CD14-positive monocyte (primary cell): ENCODE measurements at regions of chr5 and their contacts with region 1.

Region 1: DNA sequence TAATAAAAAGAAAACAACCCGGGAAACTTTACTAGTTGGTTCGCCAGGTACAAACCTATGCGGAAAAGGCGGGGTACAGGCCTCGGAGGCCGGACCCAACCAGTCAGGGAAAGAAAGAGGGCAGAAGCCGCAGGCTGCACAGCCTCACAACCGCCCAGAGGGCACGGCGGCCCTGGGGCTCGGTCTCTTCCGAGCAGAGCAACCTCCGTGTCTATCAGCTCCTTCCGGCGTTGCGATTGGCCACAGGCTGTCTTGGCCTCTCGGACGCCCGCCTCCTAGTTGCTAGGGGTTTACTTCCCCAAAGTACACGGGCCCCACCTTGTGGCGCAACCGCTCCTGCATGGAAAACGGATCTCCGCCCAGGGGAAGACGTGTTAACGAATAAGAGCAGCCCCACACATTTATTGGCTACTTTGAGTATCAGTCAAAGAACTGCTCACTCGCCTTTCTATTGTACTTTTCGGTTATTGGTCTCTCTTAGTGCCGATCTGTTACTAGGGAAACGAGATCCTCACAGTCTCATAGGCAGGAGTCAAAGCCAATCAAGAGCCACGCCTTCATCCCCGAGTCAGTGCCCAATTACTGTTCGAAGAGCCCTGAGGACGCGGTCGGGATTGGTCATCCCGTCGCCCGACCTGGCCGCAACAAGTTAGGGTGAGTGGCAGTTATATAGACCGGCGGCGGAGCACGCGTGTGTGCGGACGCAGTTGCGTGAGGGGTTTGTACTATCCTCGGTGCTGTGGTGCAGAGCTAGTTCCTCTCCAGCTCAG is at the start of gene G3BP1:
- DNase-seq: peak; percentile 100
- H3K4me3 ChIP-seq: peak within 1 kb of the TSS; percentile 62 to 82 (median 67)
- H3K4me3 Mint-ChIP-seq: peak within 1 kb of the TSS; percentile 88 to 97
- H3K27ac ChIP-seq: peak within 1 kb of the TSS; percentile 97
- H3K27ac Mint-ChIP-seq: peak within 1 kb of the TSS in 6 of 7 donors; percentile 90 to 96 (median 93)
- H3K4me1 ChIP-seq: peaks cover 27 to 50% of the 10 kb centered on the region in 2 donors
- H3K4me1 Mint-ChIP-seq: peaks cover 41% of the 10 kb centered on the region
- H3K27me3 ChIP-seq: no peaks in the 10 kb centered on the region
- H3K27me3 Mint-ChIP-seq: no peaks in the 10 kb centered on the region
- CTCF ChIP-seq: peak; percentile 19
- polyA plus RNA-seq, gene G3BP1: 10.6 to 60.6 (median 58.8) TPM

Region 2: GRCh38 chr5:151758430-151759241 is 12.8 kb before region 1 on chr5 and contains the start of gene ATOX1:
- intact Hi-C with region 1: loop called in 1 of 2 experiments (anchors 2 kb)
- DNase-seq: peak; percentile 90 to 92 (median 92)
- H3K4me3 ChIP-seq: peak within 1 kb of the TSS; percentile 63 to 99 (median 84)
- H3K4me3 Mint-ChIP-seq: peak within 1 kb of the TSS; percentile 90 to 95
- H3K27ac ChIP-seq: peak within 1 kb of the TSS; percentile 73 to 97
- H3K27ac Mint-ChIP-seq: peak within 1 kb of the TSS; percentile 88 to 97 (median 93)
- H3K4me1 ChIP-seq: peaks cover 27 to 33% of the 10 kb centered on the region in 2 donors
- H3K4me1 Mint-ChIP-seq: peaks cover 36% of the 10 kb centered on the region
- H3K27me3 ChIP-seq: no peaks in the 10 kb centered on the region
- H3K27me3 Mint-ChIP-seq: peaks cover 0 to 3% (median 1%) of the 10 kb centered on the region in 3 donors
- CTCF ChIP-seq: peak; percentile 14
- polyA plus RNA-seq, gene ATOX1: 89.9 to 149 (median 148) TPM

Region 3: DNA sequence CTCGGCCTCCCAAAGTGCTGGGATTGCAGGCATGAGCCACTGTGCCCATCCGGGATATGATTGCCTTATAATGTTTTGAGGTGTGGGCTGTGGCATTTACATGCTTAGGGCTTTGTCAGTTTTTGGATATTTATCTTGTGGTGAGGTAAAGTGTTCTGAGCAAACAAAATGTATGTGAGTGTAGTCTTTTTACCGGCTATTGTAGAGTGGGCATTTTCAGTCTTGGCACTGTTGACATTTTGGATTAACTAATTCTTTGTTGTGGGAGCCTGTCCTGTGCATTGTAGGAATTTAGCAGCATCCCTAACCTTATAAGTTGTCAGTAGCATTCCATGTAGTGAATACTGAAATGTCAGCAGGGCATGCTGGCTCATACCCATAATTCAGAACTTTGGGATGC is 21.9 kb after region 1 on chr5:
- intact Hi-C with region 1: no loop called
- DNase-seq: no peak
- H3K4me3 ChIP-seq: no peak overlapping the region
- H3K4me3 Mint-ChIP-seq: no peak overlapping the region
- H3K27ac ChIP-seq: no peak overlapping the region
- H3K27ac Mint-ChIP-seq: peak overlapping the region in 1 of 7 donors; percentile 25
- H3K4me1 ChIP-seq: peaks cover 0 to 3% of the 10 kb centered on the region in 2 donors
- H3K4me1 Mint-ChIP-seq: peaks cover 4% of the 10 kb centered on the region
- H3K27me3 ChIP-seq: no peaks in the 10 kb centered on the region
- H3K27me3 Mint-ChIP-seq: no peaks in the 10 kb centered on the region
- CTCF ChIP-seq: no peak